ENCODE measurements at regions of chr10 and their contacts with region 1.

Region 1: GRCh38 chr10:67079126-67079525 is 153.3 kb downstream of the LRRTM3 start:
- DNase-seq: no peak
- H3K4me3 ChIP-seq: no peak overlapping the region
- H3K4me3 Mint-ChIP-seq: no peak overlapping the region
- H3K27ac Mint-ChIP-seq: no peak overlapping the region
- H3K4me1 ChIP-seq: peaks cover 14% of the 10 kb centered on the region
- H3K4me1 Mint-ChIP-seq: peaks cover 17% of the 10 kb centered on the region
- H3K27me3 ChIP-seq: no peaks in the 10 kb centered on the region
- H3K27me3 Mint-ChIP-seq: no peaks in the 10 kb centered on the region
- CTCF ChIP-seq: no peak

Region 2: GRCh38 chr10:66910676-66911075 is 168.4 kb before region 1 on chr10:
- CTCF ChIA-PET with region 1: no interaction called
- POLR2A ChIA-PET with region 1: no interaction called
- intact Hi-C with region 1: loop called (anchors 1 kb)
- DNase-seq: no peak
- H3K4me3 ChIP-seq: no peak overlapping the region
- H3K4me3 Mint-ChIP-seq: no peak overlapping the region
- H3K27ac Mint-ChIP-seq: no peak overlapping the region
- H3K4me1 ChIP-seq: no peaks in the 10 kb centered on the region
- H3K4me1 Mint-ChIP-seq: no peaks in the 10 kb centered on the region
- H3K27me3 ChIP-seq: no peaks in the 10 kb centered on the region
- H3K27me3 Mint-ChIP-seq: peaks cover 6% of the 10 kb centered on the region
- CTCF ChIP-seq: no peak